ENCODE measurements at regions of chr13 and their contacts with region 1.

Region 1: DNA sequence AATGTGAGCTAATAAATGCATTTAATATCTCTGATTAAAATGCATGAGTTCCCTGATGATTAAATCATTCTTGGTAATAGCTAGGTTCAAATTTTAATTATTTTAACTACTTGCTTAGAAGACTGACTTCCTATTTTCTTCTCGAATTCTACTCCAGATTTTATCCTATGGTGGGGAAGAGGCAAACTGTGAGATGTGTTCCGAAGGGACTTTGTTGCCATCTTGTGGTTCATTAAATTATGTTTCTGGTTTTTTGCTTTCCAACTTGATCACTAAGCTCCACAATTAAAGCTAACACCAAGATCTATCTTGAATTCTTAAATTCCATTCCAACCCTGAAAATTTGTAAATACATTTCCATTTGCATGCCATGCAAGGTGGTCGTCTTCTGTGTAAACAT is 538.4 kb upstream of the PCDH20 start:
- DNase-seq: no peak

Region 2: GRCh38 chr13:60448907-60449510 is 1505.1 kb before region 1 on chr13:
- intact Hi-C with region 1: loop called (anchors 5 kb)
- DNase-seq: peak in 1 of 10 donors; percentile 14

Region 3: DNA sequence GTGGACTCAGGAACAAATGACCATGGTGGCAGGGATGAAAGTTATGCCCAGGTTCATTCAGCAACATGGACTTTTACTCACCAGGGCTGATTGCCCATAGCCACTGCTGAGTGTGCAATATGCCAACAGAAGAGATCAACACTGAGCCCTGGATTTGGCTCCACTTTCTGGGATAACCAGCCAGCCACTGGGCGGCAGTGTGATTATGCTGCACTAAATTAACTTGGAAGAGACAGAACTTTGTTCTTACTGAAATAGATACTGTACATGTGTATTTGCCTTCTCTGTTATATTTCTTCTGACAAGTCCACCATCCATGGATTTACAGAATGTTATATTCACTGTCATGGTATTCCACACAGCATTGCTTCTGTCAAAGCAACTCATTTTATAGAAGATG is 1299.7 kb before region 1 on chr13:
- intact Hi-C with region 1: loop called (anchors 10 kb)
- DNase-seq: peak in 9 of 10 donors; percentile 32 to 93 (median 59)

Region 4: GRCh38 chr13:61410669-61411297 is 543.3 kb before region 1 on chr13:
- intact Hi-C with region 1: loop called (anchors 10 kb)
- DNase-seq: no peak

Region 5: GRCh38 chr13:61874970-61875579 is 79.0 kb before region 1 on chr13:
- intact Hi-C with region 1: no loop called
- DNase-seq: no peak

Region 6: GRCh38 chr13:63542770-63543169 is 1588.7 kb after region 1 on chr13:
- intact Hi-C with region 1: no loop called
- DNase-seq: no peak

Measured in posterior cingulate gyrus (tissue), 11 donors.